ENCODE measurements at regions of chr6 and their contacts with region 1.

Region 1: DNA sequence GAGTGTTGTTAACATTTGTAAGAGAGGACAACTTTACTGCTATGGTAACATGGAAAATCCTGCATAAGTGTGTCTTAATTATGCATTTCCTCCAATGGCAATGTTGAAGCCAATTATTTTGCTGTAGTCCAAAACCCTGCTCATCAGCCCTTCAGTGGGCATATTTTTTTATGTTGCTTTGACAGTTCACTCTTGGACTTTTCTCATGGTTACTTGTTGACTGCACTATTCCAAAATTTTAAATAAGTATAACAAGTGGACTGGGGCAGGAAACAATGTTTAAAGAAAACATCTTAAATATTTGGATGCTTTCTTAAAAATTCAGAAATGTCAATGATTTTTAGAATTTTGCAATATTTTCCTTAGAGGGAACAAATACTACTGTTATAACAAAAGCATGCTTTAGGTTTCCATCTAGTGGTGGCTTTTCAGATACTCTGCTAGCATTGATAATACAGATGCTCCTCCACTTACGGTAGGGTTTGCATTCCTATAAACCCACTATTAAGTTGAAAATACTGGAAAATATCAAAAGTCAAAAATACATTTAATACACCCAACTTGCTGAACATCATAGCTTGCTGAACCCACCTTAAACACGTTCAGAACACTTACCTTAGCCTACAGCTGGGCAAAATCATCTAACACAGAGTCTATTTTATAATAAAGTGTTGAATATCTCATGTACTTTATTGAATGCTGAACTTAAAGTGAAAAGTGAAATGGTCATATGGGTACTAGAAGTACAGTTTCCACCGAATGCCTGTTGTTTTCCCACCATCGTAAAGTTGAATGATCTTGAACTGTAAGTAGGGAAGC is 86.4 kb downstream of the ADGRG6 start:
- DNase-seq: no peak
- ATAC-seq: peak in 1 of 8 donors; percentile 55
- H3K4me3 ChIP-seq: no peak overlapping the region
- H3K27ac ChIP-seq: no peak overlapping the region
- H3K4me1 ChIP-seq: no peaks in the 10 kb centered on the region
- H3K27me3 ChIP-seq: no peaks in the 10 kb centered on the region
- CTCF ChIP-seq: peak in 8 of 9 donors; percentile 24 to 70 (median 64)

Region 2: DNA sequence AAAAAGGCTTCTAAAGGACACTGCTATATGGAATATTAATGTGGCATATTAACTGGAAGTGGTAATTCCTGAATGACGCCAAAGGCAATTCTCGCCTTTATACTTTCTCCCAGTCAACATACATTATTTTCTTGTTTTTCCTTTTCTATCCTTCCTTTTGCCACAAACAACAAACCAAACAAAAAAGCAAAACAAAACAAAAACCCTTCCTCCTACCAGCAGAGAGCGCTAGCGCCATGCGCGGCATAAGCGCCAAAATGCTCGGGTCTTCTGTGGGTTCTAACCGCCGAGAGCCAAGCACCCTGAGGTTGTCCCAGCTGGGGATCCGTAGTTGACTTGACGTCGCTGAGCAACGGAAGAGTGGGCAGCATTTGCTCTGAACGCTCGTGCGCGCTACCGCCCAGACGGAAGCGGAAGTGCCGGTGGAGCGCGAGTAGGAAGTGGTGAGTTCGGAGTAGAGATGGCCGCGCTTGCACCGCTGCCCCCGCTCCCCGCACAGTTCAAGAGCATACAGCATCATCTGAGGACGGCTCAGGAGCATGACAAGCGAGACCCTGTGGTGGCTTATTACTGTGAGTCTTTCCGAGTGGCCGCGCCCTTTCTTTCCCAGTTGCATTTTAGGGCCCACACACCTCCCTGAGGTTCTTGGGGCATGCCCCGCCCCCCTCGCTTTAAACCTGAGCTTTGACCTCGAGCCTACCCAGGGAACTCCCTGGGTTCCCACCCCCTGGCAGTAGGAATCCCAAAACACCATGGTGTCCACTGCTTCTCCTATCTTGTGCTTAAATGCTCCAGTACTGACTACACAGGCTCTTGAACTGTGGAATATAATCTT is 241.2 kb before region 1 on chr6 and contains the starts of genes NMBR and VTA1:
- intact Hi-C with region 1: loop called in 7 of 10 experiments (anchors 2 to 10 kb)
- DNase-seq: peak; percentile 94 to 99
- ATAC-seq: peak; percentile 99 to 100 (median 100)
- H3K4me3 ChIP-seq: peak within 1 kb of the TSS; percentile 55 to 93 (median 80)
- H3K27ac ChIP-seq: peak within 1 kb of the TSS in 9 of 10 donors; percentile 54 to 77 (median 70)
- H3K4me1 ChIP-seq: peaks cover 0 to 31% (median 22%) of the 10 kb centered on the region in 9 donors
- H3K27me3 ChIP-seq: no peaks in the 10 kb centered on the region
- CTCF ChIP-seq: peak; percentile 85 to 98 (median 90)
- total RNA-seq, gene NMBR: not detected
- total RNA-seq, gene VTA1: 33.3 to 42.6 (median 37.8) TPM

Region 3: DNA sequence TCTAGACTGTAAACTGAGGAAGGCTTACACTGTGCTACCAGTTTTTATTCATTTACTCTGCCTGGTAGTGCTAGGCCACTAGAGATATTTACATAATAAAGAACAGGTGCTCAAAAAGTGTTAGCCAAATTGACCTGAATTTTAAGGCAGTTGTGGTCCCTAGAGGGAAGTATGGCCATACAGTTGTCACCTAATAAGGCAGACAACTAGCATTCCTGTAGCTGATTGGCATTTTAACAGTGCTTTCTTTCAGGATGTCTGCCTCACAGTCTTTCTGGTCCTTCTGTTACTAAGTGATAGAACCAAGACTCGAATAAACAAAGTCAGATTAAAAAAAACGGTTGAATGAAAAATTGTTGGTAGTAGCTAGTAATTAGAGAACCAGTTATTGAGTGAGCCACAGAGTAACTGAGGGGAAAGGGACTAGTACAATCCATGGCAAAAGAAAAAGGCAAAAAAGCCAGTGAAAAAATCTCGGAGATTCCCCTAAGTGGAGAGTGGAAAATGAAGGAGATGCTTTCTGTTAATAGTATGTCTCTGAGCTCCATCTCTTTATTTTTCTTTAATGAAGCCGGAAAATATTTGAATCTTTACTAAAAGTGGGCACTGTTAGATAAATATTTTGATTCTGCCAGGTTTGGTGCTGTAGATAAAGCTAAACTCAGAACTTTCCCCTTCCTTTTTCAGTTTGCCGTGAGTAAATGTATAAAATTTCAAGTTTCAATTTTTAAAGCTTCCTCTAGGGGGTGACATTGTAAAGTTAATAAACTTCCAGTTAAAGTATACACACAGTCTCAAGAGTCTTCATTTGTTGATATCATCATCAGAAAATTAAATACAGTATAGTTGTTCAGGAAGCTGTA is 232.1 kb before region 1 on chr6:
- intact Hi-C with region 1: loop called in 6 of 10 experiments (anchors 2 to 10 kb)
- DNase-seq: no peak
- ATAC-seq: peak in 2 of 8 donors; percentile 28 to 56
- H3K4me3 ChIP-seq: no peak overlapping the region
- H3K27ac ChIP-seq: no peak overlapping the region
- H3K4me1 ChIP-seq: peaks cover 0 to 31% (median 0%) of the 10 kb centered on the region in 9 donors
- H3K27me3 ChIP-seq: no peaks in the 10 kb centered on the region
- CTCF ChIP-seq: peak in 8 of 9 donors; percentile 25 to 63 (median 48)

Region 4: DNA sequence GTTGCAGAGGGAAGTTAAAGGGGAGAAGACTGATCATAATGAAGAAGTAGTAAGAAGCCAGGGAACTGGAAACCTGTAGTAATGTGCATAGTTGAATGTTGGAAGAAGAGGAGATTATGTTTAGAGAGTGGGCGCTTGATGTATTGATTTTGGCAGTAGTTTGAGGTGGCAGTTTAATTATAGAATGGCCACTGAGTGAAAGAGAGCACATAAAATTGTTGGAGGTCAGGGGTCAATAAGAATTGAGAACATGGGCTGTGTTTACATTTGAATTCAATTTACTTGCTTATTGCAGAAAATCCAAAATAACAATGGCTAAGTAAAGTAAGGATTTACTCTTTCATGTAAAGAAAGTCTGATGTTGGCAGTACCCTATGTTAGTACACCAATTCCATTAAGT is 225.4 kb before region 1 on chr6:
- intact Hi-C with region 1: loop called in 4 of 10 experiments (anchors 5 to 10 kb)
- DNase-seq: no peak
- ATAC-seq: no peak
- H3K4me3 ChIP-seq: no peak overlapping the region
- H3K27ac ChIP-seq: no peak overlapping the region
- H3K4me1 ChIP-seq: peaks cover 0 to 36% (median 4%) of the 10 kb centered on the region in 9 donors
- H3K27me3 ChIP-seq: no peaks in the 10 kb centered on the region
- CTCF ChIP-seq: no peak

Region 5: GRCh38 chr6:142236691-142237090 is 151.5 kb before region 1 on chr6:
- intact Hi-C with region 1: loop called in 1 of 10 experiments (anchors 10 kb)
- DNase-seq: no peak
- ATAC-seq: no peak
- H3K4me3 ChIP-seq: no peak overlapping the region
- H3K27ac ChIP-seq: no peak overlapping the region
- H3K4me1 ChIP-seq: peaks cover 0 to 10% (median 0%) of the 10 kb centered on the region in 9 donors
- H3K27me3 ChIP-seq: peaks cover 0 to 8% (median 0%) of the 10 kb centered on the region in 7 donors
- CTCF ChIP-seq: no peak

Region 6: DNA sequence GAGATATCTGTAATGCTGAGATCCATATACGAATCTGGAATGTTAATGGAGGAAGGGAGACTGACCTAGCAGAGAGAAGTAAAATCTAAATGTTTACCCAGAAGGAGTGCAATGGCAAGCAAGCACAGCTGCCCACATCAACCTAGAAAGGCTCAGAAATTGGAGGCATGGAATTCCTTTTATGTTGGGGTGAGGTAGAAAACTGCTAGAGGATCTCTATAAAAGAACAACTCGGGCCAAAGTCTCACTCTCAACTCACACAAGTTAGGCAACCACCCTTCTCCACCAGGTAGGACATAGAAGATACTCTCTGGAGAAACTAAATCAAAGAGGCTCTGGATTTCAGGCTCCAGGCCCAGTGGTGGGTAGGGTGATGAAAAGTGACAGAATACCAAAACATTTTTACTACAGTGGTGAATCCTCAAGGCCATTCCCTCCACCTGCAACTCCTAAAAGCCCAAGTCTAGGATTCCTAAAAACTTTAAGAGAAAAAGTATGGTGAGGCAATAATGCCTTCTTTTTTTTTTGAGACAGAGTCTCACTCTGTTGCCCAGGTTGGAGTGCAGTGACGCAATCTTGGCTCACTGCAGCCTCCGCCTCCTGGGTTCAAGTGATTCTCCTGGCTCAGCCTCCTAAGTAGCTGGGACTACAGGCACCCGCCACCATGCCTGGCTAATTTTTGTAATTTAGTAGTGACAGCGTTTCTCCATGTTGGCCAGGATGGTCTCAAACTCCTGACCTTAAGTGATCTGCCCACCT is 95.9 kb before region 1 on chr6:
- intact Hi-C with region 1: no loop called
- DNase-seq: no peak
- ATAC-seq: no peak
- H3K4me3 ChIP-seq: no peak overlapping the region
- H3K27ac ChIP-seq: no peak overlapping the region
- H3K4me1 ChIP-seq: no peaks in the 10 kb centered on the region
- H3K27me3 ChIP-seq: peaks cover 0 to 3% (median 0%) of the 10 kb centered on the region in 7 donors
- CTCF ChIP-seq: no peak